Calu3 (cell line): ENCODE measurements at regions of chr1 and their contacts with region 1.

Region 1: GRCh38 chr1:117534995-117535467 is 70.8 kb upstream of the TENT5C start:
- DNase-seq: peak; percentile 35
- H3K4me3 Mint-ChIP-seq: no peak overlapping the region
- H3K27ac Mint-ChIP-seq: no peak overlapping the region
- H3K4me1 Mint-ChIP-seq: no peaks in the 10 kb centered on the region
- H3K27me3 Mint-ChIP-seq: no peaks in the 10 kb centered on the region
- CTCF ChIP-seq: peak; percentile 62

Region 2: DNA sequence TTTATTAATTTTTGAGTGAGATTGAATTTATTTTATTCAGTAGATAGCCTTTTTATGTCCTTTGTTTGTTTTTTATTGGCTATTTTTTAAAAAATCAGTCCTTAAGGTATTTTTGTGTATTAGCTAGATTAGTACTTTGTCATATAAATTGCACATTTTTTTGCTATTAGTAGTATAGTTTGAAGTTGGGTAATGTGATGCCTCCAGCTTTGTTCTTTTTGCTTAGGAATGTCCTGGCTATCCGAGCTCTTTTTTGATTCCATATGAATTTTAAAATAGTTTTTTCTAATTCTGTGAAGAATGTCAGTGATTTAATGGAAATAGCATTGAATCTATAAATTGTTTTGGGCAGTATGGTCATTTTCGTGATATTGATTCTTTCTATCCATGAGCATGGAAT is 87.4 kb before region 1 on chr1:
- CTCF ChIA-PET with region 1: no interaction called
- intact Hi-C with region 1: no loop called
- DNase-seq: no peak
- H3K4me3 Mint-ChIP-seq: no peak overlapping the region
- H3K27ac Mint-ChIP-seq: no peak overlapping the region
- H3K4me1 Mint-ChIP-seq: no peaks in the 10 kb centered on the region
- H3K27me3 Mint-ChIP-seq: no peaks in the 10 kb centered on the region
- CTCF ChIP-seq: no peak

Region 3: GRCh38 chr1:117501281-117501680 is 33.8 kb before region 1 on chr1:
- CTCF ChIA-PET with region 1: no interaction called
- intact Hi-C with region 1: loop called (anchors 1 kb)
- DNase-seq: no peak
- H3K4me3 Mint-ChIP-seq: no peak overlapping the region
- H3K27ac Mint-ChIP-seq: no peak overlapping the region
- H3K4me1 Mint-ChIP-seq: no peaks in the 10 kb centered on the region
- H3K27me3 Mint-ChIP-seq: no peaks in the 10 kb centered on the region
- CTCF ChIP-seq: no peak

Region 4: GRCh38 chr1:117664314-117664713 is 129.3 kb after region 1 on chr1:
- CTCF ChIA-PET with region 1: no interaction called
- intact Hi-C with region 1: loop called (anchors 10 kb)
- DNase-seq: no peak
- H3K4me3 Mint-ChIP-seq: no peak overlapping the region
- H3K27ac Mint-ChIP-seq: no peak overlapping the region
- H3K4me1 Mint-ChIP-seq: no peaks in the 10 kb centered on the region
- H3K27me3 Mint-ChIP-seq: peaks cover 25% of the 10 kb centered on the region
- CTCF ChIP-seq: no peak

Region 5: DNA sequence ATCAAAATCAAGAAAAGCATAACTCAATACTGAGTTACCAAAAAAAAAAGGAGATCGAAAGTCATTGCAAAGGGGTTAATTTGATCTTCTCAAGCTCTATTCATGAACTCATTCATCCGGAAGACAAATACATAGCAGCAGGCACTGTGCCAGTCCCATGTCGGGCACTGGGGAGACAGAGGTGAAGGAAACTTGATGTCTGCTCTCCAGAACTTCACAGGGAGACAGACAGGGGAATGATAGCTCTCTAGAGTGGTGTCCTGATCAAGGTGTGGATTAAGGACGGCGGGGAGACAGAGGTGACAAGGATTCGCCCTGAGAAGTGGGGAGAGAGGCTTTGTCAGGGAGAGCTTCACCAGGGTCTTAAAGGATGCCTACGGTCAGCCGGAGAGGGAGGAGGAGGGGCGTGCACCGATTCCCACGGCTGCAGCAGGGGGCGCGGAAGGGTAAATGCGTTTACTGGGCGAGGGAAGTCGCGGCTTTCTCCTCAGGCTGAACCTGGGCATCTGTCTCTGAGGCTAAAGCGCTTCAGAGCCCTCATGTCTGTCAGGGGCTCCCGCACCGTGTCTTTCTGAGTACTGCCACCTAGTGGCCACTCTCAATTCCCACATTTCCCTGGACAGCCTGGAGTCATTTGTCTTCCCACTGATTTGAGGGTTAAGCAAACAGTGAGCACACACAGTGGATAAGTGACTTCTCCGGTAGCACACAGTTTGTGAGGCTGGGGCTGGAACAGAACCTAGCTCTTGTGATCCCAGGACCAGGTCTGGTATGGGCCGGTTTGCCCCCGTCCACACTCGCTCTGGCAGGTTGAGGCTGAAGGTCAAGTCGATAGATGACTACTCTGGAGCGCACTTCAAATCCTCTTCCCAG is 223.6 kb after region 1 on chr1:
- CTCF ChIA-PET with region 1: interaction called, 11 read pairs
- intact Hi-C with region 1: loop called (anchors 2 kb)
- DNase-seq: peak; percentile 63
- H3K4me3 Mint-ChIP-seq: peak overlapping the region; percentile 65
- H3K27ac Mint-ChIP-seq: no peak overlapping the region
- H3K4me1 Mint-ChIP-seq: no peaks in the 10 kb centered on the region
- H3K27me3 Mint-ChIP-seq: peaks cover 24% of the 10 kb centered on the region
- CTCF ChIP-seq: peak; percentile 60